Activated naive CD4-positive, alpha-beta T cell treated with anti-CD3 and anti-CD28 coated beads for 36 hours (primary cell): ENCODE measurements at regions of chr14 and their contacts with region 1.

Region 1: DNA sequence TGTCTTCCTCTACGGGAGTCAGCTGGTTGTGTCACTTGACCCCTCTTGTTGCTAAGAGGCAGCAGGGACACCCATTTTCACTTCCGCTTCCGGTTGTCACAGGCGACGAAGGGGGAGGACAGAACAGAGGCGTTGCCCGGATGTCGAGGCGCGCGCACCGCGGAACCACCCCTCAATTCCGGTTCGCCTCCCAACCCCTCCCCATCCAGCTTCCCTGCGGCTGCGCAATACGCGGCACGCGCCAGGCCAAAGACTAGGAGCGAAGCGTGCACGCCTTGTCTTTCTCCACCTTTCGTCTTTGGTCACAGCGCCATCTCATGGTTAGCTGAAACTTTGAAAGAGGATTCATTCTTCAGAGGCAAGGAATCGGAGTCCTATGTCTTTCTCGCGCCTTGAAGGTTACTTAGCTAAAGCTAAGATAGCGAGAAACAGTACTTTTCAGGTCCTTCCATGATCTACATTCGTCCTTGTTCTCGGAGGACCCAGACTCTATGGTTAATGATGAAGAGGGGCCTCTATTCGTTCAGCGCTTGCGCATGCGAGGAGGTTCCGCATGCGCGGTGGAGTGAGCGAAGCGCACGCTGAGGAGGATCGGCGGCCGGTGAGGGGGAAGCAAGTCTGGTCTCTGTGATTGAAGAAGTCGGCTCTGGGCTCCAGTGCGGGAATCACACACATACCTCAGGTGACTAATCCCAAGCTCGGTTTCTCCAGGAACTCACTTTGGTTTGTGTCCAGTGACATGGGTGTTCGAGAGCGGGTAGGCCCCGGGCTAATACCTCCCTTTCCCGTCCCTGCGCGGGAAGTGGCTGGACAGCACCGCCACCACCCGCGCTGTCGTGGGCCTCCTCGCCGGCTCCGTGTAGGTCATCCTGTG is at the starts of genes ATP6V1D and EIF2S1:
- DNase-seq: peak; percentile 100
- H3K4me3 Mint-ChIP-seq: peak within 1 kb of the TSS; percentile 98
- H3K27ac Mint-ChIP-seq: peak within 1 kb of the TSS; percentile 95
- H3K4me1 Mint-ChIP-seq: peaks cover 63% of the 10 kb centered on the region
- H3K27me3 Mint-ChIP-seq: no peaks in the 10 kb centered on the region
- total RNA-seq, gene ATP6V1D: 16.5 to 19.9 TPM
- total RNA-seq, gene EIF2S1: 186 to 196 TPM

Region 2: GRCh38 chr14:66507722-66508546 is 852.1 kb before region 1 on chr14 and contains the start of gene GPHN:
- CTCF ChIA-PET with region 1: no interaction called
- intact Hi-C with region 1: loop called (anchors 1 kb)
- DNase-seq: peak; percentile 92
- H3K4me3 Mint-ChIP-seq: peak within 1 kb of the TSS; percentile 96
- H3K27ac Mint-ChIP-seq: peak within 1 kb of the TSS; percentile 85
- H3K4me1 Mint-ChIP-seq: peaks cover 28% of the 10 kb centered on the region
- H3K27me3 Mint-ChIP-seq: peaks cover 7% of the 10 kb centered on the region
- total RNA-seq, gene GPHN: 14.2 to 21.4 TPM

Region 3: GRCh38 chr14:67166450-67166853 is 193.6 kb before region 1 on chr14:
- CTCF ChIA-PET with region 1: interaction called, 3 read pairs
- intact Hi-C with region 1: loop called (anchors 1 kb)
- DNase-seq: peak; percentile 71
- H3K4me3 Mint-ChIP-seq: no peak overlapping the region
- H3K27ac Mint-ChIP-seq: no peak overlapping the region
- H3K4me1 Mint-ChIP-seq: no peaks in the 10 kb centered on the region
- H3K27me3 Mint-ChIP-seq: no peaks in the 10 kb centered on the region

Region 4: DNA sequence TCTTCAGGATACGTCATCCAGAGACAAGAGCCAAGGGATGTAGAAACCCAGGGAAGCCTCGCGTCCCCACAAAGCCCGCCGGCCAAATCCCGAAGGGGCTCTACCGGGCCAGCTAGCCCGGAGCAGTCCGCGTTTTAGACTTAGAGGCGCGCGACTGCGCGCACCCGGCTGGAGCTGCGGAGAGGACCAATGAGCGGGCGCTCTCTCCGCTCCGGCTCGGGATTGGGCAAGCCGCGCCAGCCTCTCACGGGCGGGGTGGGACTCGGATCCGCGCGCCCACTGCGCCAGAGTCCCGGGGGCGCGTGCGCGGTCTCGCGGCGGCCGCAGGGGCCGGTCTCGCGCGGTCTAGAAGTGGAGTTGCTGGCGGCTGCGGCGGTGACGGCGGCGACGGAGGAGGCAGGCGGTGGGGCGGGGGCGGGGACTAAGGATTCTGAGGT is 119.0 kb before region 1 on chr14:
- CTCF ChIA-PET with region 1: interaction called, 5 read pairs
- intact Hi-C with region 1: loop called (anchors 1 kb)
- DNase-seq: peak; percentile 94
- H3K4me3 Mint-ChIP-seq: peak overlapping the region; percentile 85
- H3K27ac Mint-ChIP-seq: peak overlapping the region; percentile 86
- H3K4me1 Mint-ChIP-seq: peaks cover 19% of the 10 kb centered on the region
- H3K27me3 Mint-ChIP-seq: peaks cover 2% of the 10 kb centered on the region

Region 5: DNA sequence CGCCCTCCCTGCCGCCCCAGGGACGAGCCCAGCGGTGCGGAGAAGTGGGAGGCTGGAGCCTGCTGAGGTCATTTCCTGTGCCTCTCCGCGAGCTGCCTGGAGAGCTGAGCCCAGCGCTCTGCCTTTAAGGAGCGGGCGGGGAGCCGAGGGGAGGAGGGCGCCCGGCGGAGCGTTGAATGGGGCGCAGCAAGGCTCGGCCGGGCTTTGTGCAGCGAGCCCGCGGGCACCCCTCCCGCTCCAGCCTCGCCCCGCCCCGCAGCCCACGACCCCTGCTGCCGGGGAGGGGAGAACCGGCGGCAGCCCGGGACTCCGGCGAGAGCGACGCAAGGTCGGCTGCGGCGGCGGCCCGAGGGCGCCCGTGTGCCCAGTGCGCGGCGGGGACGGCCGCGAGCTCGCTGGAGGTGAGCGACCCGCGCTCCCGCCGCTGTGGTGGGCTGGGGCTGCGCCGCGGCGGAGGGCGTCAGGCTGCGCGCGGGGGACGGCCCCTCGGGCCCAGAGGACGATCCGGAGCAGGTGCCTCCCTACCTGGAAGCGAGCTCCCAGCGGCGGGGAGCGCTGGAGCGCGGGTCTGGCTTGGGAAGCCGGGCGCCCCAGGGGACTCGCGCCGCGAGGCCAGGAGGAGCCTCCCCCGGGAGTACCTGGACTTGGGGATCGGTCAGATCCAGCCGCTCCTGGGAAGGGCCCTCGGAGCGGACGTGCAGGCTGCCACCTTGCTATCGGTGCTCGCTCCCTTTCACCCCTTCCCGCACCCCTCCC is 173.2 kb after region 1 on chr14 and contains the start of gene PLEKHH1:
- CTCF ChIA-PET with region 1: no interaction called
- intact Hi-C with region 1: loop called (anchors 5 kb)
- DNase-seq: peak; percentile 76
- H3K4me3 Mint-ChIP-seq: peak within 1 kb of the TSS; percentile 65
- H3K27ac Mint-ChIP-seq: no peak within 1 kb of the TSS
- H3K4me1 Mint-ChIP-seq: peaks cover 3% of the 10 kb centered on the region
- H3K27me3 Mint-ChIP-seq: peaks cover 16% of the 10 kb centered on the region
- total RNA-seq, gene PLEKHH1: 2.2 to 2.5 TPM

Region 6: DNA sequence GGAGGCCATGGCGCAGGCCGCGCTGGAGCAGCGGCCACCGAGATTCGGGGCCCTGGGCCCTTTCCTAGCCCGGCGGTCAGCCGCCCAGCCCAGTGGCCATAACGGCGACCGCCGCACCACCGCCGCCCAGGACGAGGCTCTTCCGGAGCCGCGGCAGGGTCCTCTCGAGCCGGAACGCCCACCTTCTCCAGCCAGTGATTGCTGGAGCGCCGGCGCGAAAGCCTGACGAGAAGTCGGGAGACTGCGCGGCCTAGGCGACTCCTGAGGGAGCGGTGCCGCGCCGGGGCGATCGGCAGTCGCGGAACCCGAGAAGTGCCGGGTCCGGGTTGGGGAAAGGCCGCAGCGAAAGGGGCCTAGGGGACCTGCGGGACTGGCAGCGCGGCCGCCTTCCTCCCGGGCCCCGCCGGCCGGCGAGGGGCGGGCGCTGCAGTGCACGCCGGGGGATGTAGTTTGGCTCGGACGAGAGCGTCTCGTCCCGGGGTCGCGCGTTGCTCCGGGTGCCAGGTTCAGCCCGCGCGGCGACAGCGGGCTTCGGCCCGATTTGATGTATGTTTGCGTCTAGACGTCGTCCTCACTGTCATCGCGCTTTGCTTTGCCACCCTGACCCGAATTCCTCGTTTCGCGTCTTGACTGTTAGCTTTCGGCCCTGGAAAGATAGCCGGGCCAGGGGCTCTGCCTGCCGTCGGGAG is 314.6 kb after region 1 on chr14 and contains the start of gene VTI1B:
- CTCF ChIA-PET with region 1: no interaction called
- intact Hi-C with region 1: loop called (anchors 2 kb)
- DNase-seq: peak; percentile 68
- H3K4me3 Mint-ChIP-seq: peak within 1 kb of the TSS; percentile 80
- H3K27ac Mint-ChIP-seq: peak within 1 kb of the TSS; percentile 66
- H3K4me1 Mint-ChIP-seq: peaks cover 34% of the 10 kb centered on the region
- H3K27me3 Mint-ChIP-seq: no peaks in the 10 kb centered on the region
- total RNA-seq, gene VTI1B: 74.2 to 78.3 TPM

Region 7: DNA sequence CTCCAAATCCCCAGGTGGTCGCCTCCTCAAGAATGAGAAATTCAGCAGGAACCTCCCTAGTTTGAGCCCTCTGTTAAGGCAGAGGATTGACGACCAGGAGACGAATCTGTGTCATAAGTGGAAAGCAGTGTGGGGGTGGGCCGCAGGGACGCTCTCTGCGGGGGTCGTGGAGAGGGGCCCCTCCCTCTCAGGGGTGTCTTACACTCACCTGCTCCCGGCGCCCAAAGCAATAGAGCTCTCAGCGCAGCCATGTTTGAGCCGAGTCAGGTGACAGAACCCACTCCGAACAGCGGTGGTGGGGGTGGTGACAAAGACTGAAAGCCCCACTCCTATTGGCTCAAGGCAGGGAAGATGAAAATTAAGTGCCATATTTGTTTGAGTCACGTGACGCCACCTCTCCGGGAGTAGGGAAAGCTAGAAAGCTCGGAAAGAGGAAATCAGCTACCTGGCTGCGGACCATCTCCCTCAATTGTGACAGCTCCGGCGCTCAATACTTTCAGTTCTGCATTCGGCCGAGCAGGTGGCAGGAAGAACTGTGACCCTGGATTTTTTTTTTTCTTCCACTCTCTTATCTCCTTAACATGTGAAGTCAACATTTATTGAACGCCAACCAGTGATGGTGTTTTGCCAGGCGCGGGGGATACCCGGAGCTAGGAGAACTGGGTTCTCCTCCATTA is 456.5 kb after region 1 on chr14 and contains the start of gene ZFYVE26:
- CTCF ChIA-PET with region 1: no interaction called
- intact Hi-C with region 1: loop called (anchors 1 kb)
- DNase-seq: peak; percentile 96
- H3K4me3 Mint-ChIP-seq: peak within 1 kb of the TSS; percentile 95
- H3K27ac Mint-ChIP-seq: peak within 1 kb of the TSS; percentile 91
- H3K4me1 Mint-ChIP-seq: peaks cover 46% of the 10 kb centered on the region
- H3K27me3 Mint-ChIP-seq: no peaks in the 10 kb centered on the region
- total RNA-seq, gene ZFYVE26: 11.7 to 12.1 TPM